ENCODE measurements at regions of chr3 and their contacts with region 1.

Region 1: GRCh38 chr3:119600732-119601131 is 3.0 kb downstream of the PLA1A start:
- DNase-seq: peak; percentile 53
- ATAC-seq: peak; percentile 71

Region 2: DNA sequence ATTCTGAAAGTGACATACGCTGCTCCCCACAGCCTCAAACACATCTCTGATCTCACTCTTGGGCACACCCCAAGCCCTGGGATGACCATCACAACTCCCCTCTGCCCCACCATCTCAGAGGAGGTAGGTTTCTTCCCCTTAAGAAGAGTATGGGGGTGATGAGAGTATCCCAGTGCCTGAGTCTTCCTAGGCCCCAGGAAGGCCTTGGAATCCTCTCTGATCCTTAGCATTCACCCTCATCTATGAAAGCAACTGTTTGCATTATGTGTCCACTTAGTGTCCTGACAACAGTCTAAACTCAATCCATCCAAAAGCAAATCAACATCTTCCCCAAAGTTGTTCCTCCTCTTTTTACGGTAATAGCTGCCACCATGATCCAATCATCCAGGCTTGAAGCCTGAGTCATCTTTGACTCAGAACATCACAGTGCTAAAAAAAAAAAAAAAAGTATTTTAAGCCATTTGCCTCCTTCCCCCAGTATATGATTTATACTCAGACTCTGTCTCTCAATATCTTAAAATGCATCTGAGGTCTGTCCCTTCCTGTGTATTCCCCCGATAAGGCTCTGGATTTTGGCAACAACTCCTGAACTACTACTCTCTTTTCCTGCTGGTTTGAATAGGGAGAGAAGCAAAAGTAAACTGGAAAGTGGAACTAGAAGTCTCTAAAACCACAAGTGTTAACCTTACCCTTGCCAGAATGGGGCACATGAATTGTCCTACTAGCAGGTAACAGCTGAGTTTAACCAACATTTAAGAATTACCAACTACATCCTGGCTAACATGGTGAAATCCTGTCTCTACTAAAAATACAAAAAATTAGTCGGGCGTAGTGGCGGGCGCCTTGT is 37.2 kb after region 1 on chr3:
- intact Hi-C with region 1: loop called (anchors 5 kb)
- DNase-seq: no peak
- ATAC-seq: peak; percentile 5

Measured in Right ventricle myocardium superior (tissue), 1 donor.